Activated CD4-positive, alpha-beta memory T cell treated with anti-CD3 and anti-CD28 coated beads for 36 hours (primary cell): ENCODE measurements at regions of chr17 and their contacts with region 1.

Region 1: DNA sequence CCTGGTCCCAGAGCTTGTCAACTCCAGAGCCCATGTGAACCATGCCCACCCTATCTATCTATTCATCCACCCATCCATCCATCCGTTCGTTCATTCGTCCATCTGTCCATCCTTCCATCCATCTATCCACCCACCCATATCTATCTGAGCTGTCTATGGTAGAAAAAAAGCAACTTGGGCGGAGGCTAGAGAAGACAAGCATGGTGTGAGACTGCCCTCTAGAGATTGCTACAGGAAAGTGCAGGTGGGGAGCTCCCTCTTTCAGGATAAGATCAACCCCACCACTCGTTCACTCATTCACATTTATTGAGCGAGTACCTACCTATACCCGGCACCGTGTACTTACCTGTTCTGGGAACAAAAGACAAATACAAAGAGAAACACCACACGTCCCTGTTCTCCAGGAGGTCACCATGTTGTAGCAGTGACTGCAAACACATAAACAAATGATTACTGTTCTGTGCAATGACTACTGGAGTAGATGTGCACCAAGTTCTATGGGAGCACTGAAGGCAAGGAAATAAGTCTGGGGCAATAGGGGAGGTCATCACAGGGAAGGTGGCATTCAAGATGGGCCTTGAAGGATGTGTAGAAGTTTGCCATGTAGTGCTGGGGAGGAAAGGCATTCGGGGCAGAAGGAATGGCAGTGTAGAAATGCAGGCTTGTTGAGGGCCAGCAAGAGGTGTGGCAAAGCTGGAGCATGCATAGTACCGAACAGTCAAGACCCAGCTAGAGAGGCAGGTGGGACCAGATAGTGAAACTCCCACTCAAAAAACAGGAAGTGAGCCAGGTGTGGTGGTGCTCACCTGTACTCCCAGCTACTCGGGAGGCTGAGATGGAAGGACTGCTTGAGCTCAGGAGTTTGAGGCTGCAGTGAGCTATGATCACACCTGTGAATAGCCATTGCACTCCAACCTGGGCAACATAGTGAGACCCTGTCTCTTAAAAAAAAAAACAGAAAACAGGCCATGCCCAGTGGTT is 13.4 kb upstream of the ATP5MC1 start:
- DNase-seq: peak; percentile 64
- H3K4me3 Mint-ChIP-seq: no peak overlapping the region
- H3K27ac Mint-ChIP-seq: no peak overlapping the region
- H3K4me1 Mint-ChIP-seq: no peaks in the 10 kb centered on the region
- H3K27me3 Mint-ChIP-seq: peaks cover 5% of the 10 kb centered on the region

Region 2: GRCh38 chr17:48678141-48678971 is 200.9 kb before region 1 on chr17:
- CTCF ChIA-PET with region 1: interaction called, 119 read pairs
- POLR2A ChIA-PET with region 1: no interaction called
- intact Hi-C with region 1: loop called (anchors 2 kb)
- DNase-seq: peak; percentile 79
- H3K4me3 Mint-ChIP-seq: no peak overlapping the region
- H3K27ac Mint-ChIP-seq: no peak overlapping the region
- H3K4me1 Mint-ChIP-seq: peaks cover 2% of the 10 kb centered on the region
- H3K27me3 Mint-ChIP-seq: peaks cover 29% of the 10 kb centered on the region

Region 3: DNA sequence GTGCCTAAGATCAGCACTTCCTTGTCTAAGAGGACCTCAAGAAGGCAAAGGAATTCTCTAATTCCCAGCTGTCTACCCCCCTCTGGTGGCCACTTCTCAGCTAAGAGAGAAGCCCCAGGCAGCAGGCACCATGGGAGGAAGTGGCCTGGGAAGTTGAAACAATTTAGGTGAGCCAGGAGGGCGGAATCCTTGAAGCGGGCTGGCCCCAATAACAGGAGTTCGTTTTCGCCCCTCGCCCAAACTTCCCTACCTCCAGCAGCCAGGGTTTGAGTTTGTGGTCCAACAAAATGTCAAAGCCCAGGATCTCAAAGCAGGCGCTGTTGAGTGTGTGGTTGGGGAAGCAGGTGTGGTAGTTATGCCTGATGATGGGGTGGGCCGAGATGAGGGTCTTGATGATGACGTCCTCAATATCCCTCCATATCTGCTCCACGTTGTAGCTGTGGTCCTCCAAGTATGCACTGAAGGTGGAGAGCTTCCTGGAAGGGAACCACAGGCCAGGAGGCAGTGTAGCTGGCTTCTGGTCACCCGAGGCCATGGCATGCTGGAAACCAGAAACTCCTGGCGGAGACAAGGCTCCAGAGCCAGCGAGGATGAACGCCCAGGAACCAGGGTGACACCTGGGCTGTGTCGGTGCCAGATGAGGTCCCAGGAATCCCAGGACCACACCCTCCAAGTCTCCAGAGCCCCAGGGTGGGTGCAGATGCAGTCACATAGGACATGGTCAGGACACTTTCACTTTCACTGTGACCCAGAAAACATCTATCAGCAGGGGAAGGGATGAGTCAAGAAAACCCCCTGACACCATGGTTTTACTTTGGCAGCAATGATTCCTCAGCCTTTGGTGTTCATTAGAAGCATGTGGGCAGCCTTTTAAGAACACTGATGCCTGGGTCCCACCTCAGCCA is 87.8 kb before region 1 on chr17:
- CTCF ChIA-PET with region 1: interaction called, 11 read pairs
- POLR2A ChIA-PET with region 1: no interaction called
- intact Hi-C with region 1: no loop called
- DNase-seq: peak; percentile 43
- H3K4me3 Mint-ChIP-seq: no peak overlapping the region
- H3K27ac Mint-ChIP-seq: no peak overlapping the region
- H3K4me1 Mint-ChIP-seq: peaks cover 5% of the 10 kb centered on the region
- H3K27me3 Mint-ChIP-seq: peaks cover 29% of the 10 kb centered on the region

Region 4: GRCh38 chr17:48816774-48817590 is 62.2 kb before region 1 on chr17 and contains the start of gene TTLL6:
- CTCF ChIA-PET with region 1: interaction called, 614 read pairs
- POLR2A ChIA-PET with region 1: interaction called, 3 read pairs
- intact Hi-C with region 1: loop called (anchors 1 kb)
- DNase-seq: peak; percentile 82
- H3K4me3 Mint-ChIP-seq: peak within 1 kb of the TSS; percentile 60
- H3K27ac Mint-ChIP-seq: no peak within 1 kb of the TSS
- H3K4me1 Mint-ChIP-seq: peaks cover 17% of the 10 kb centered on the region
- H3K27me3 Mint-ChIP-seq: peaks cover 44% of the 10 kb centered on the region
- total RNA-seq, gene TTLL6: not detected

Region 5: DNA sequence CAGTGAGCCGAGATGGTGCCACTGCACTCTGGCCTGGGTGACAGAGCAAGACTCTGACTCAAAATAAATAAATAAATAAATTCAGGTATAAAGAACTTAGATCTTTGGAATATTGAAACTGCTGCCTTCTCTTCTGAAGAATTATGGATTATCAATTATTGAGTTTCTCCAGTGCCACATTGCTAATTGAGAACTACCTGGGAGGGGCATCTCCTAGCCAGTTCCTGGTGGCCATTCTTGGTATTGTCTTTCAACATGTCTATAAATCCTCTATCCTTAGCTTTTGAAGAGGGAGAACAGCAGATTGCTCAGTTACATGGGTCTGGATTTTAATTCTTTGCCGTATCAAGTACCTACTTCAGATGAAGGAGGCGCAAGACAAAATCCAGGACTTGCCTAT is 19.2 kb before region 1 on chr17:
- CTCF ChIA-PET with region 1: interaction called, 44 read pairs
- POLR2A ChIA-PET with region 1: no interaction called
- intact Hi-C with region 1: no loop called
- DNase-seq: no peak
- H3K4me3 Mint-ChIP-seq: no peak overlapping the region
- H3K27ac Mint-ChIP-seq: no peak overlapping the region
- H3K4me1 Mint-ChIP-seq: peaks cover 3% of the 10 kb centered on the region
- H3K27me3 Mint-ChIP-seq: no peaks in the 10 kb centered on the region

Region 6: GRCh38 chr17:49266233-49266632 is 387.0 kb after region 1 on chr17:
- CTCF ChIA-PET with region 1: no interaction called
- POLR2A ChIA-PET with region 1: no interaction called
- intact Hi-C with region 1: no loop called
- DNase-seq: no peak
- H3K4me3 Mint-ChIP-seq: no peak overlapping the region
- H3K27ac Mint-ChIP-seq: no peak overlapping the region
- H3K4me1 Mint-ChIP-seq: peaks cover under 1% of the 10 kb centered on the region
- H3K27me3 Mint-ChIP-seq: peaks cover 1% of the 10 kb centered on the region